ENCODE measurements at regions of chr10 and their contacts with region 1.

Region 1: GRCh38 chr10:126917975-126918908 is 13.0 kb downstream of the DOCK1 start:
- DNase-seq: no peak
- ATAC-seq: peak in 5 of 8 donors; percentile 22 to 85 (median 39)
- H3K4me3 ChIP-seq: no peak overlapping the region
- H3K27ac ChIP-seq: peak overlapping the region in 5 of 10 donors; percentile 26 to 80 (median 70)
- H3K4me1 ChIP-seq: peaks cover 10 to 51% (median 28%) of the 10 kb centered on the region in 9 donors
- H3K27me3 ChIP-seq: no peaks in the 10 kb centered on the region
- CTCF ChIP-seq: no peak

Region 2: GRCh38 chr10:126969310-126969709 is 51.1 kb after region 1 on chr10:
- intact Hi-C with region 1: loop called in 1 of 10 experiments (anchors 1 kb)
- DNase-seq: no peak
- ATAC-seq: peak in 1 of 8 donors; percentile 37
- H3K4me3 ChIP-seq: no peak overlapping the region
- H3K27ac ChIP-seq: no peak overlapping the region
- H3K4me1 ChIP-seq: peaks cover 0 to 46% (median 9%) of the 10 kb centered on the region in 9 donors
- H3K27me3 ChIP-seq: no peaks in the 10 kb centered on the region
- CTCF ChIP-seq: peak in 4 of 9 donors; percentile 23 to 39 (median 34)

Region 3: DNA sequence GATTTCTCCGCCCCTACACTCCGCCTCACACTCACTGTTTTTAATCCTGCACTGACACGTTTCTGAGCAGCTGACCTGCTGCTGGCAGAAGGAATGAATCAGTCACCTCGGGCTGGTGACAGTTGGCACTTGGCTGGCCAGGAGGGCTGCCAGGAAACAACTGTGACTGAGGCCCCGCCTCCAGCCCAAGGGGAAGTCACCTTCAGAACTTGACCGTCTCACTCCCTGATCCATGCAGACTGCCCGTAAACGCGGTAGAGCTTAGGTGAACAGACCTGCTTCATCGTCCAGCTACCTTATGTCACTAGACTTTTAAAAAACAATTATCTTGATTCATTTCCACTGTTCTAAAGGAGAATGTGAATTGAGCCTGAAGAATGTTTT is 94.5 kb after region 1 on chr10:
- intact Hi-C with region 1: loop called in 1 of 10 experiments (anchors 5 kb)
- DNase-seq: peak; percentile 78 to 83
- ATAC-seq: peak; percentile 87 to 98 (median 96)
- H3K4me3 ChIP-seq: peak overlapping the region in 3 of 10 donors; percentile 17 to 32 (median 20)
- H3K27ac ChIP-seq: peak overlapping the region in 9 of 10 donors; percentile 39 to 74 (median 65)
- H3K4me1 ChIP-seq: peaks cover 0 to 23% (median 11%) of the 10 kb centered on the region in 9 donors
- H3K27me3 ChIP-seq: no peaks in the 10 kb centered on the region
- CTCF ChIP-seq: no peak